ENCODE measurements at regions of chr9 and their contacts with region 1.

Region 1: GRCh38 chr9:129482521-129483414 is 138.1 kb downstream of the C9orf50 start:
- DNase-seq: peak in 1 of 2 donors; percentile 93
- H3K4me3 ChIP-seq: peak overlapping the region; percentile 54 to 63
- H3K27ac ChIP-seq: peak overlapping the region; percentile 98 to 100
- H3K4me1 ChIP-seq: peaks cover 32 to 64% of the 10 kb centered on the region in 2 donors
- H3K27me3 ChIP-seq: no peaks in the 10 kb centered on the region
- CTCF ChIP-seq: peak in 1 of 3 experiments; percentile 19

Region 2: GRCh38 chr9:129413537-129414376 is 69.0 kb before region 1 on chr9:
- intact Hi-C with region 1: loop called (anchors 1 kb)
- DNase-seq: peak; percentile 96 to 99
- H3K4me3 ChIP-seq: peak overlapping the region; percentile 72 to 82
- H3K27ac ChIP-seq: peak overlapping the region; percentile 99 to 100
- H3K4me1 ChIP-seq: peaks cover 12 to 28% of the 10 kb centered on the region in 2 donors
- H3K27me3 ChIP-seq: no peaks in the 10 kb centered on the region
- CTCF ChIP-seq: peak in 2 of 3 experiments; percentile 2 to 26

Region 3: GRCh38 chr9:129702589-129703520 is 220.1 kb after region 1 on chr9:
- intact Hi-C with region 1: loop called (anchors 5 kb)
- DNase-seq: peak in 1 of 2 donors; percentile 85
- H3K4me3 ChIP-seq: peak overlapping the region in 1 of 2 donors; percentile 36
- H3K27ac ChIP-seq: peak overlapping the region; percentile 95 to 97
- H3K4me1 ChIP-seq: peaks cover 19 to 40% of the 10 kb centered on the region in 2 donors
- H3K27me3 ChIP-seq: no peaks in the 10 kb centered on the region
- CTCF ChIP-seq: no peak

Measured in ascending aorta (tissue), 2 donors.